Endothelial cell of umbilical vein (primary cell): ENCODE measurements at regions of chr1 and their contacts with region 1.

Region 1: GRCh38 chr1:156456622-156457465 is 43.7 kb downstream of the MEF2D start:
- DNase-seq: peak; percentile 95
- H3K4me3 ChIP-seq: peak overlapping the region; percentile 11 to 73 (median 31)
- H3K27ac ChIP-seq: peak overlapping the region; percentile 80
- H3K4me1 ChIP-seq: peaks cover 11% of the 10 kb centered on the region
- H3K27me3 ChIP-seq: peaks cover 6 to 10% of the 10 kb centered on the region in 2 experiments
- CTCF ChIP-seq: no peak
- POLR2A ChIP-seq: peak; percentile 80

Region 2: GRCh38 chr1:156489166-156489934 is 32.5 kb after region 1 on chr1:
- CTCF ChIA-PET with region 1: no interaction called
- POLR2A ChIA-PET with region 1: no interaction called
- dilution Hi-C with region 1: no loop called
- intact Hi-C with region 1: no loop called
- DNase-seq: no peak
- H3K4me3 ChIP-seq: no peak overlapping the region
- H3K27ac ChIP-seq: no peak overlapping the region
- H3K4me1 ChIP-seq: peaks cover 21% of the 10 kb centered on the region
- H3K27me3 ChIP-seq: no peaks in the 10 kb centered on the region
- CTCF ChIP-seq: no peak
- POLR2A ChIP-seq: no peak

Region 3: DNA sequence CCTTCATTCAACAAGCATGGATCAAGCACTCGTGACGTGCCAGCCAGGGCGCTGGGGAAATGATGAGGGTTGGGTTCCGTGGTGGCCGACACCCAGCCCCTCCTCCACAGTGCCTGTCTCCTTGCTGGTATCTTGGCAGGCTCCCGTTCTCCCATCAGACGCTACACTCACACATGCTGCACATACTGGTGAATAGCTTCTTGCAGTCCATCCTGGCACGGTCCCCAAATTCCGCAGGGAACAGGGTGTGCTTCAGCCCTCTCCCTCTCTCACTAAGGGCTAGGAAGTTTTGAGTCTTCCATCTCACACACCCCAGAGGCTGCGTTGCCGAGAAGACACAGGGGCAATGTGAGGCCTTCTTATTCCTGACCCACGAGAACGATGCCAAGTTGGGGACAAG is 53.9 kb after region 1 on chr1:
- CTCF ChIA-PET with region 1: no interaction called
- POLR2A ChIA-PET with region 1: no interaction called
- dilution Hi-C with region 1: no loop called
- intact Hi-C with region 1: no loop called
- DNase-seq: no peak
- H3K4me3 ChIP-seq: no peak overlapping the region
- H3K27ac ChIP-seq: no peak overlapping the region
- H3K4me1 ChIP-seq: peaks cover 2% of the 10 kb centered on the region
- H3K27me3 ChIP-seq: peaks cover 0 to 3% of the 10 kb centered on the region in 2 experiments
- CTCF ChIP-seq: no peak
- POLR2A ChIP-seq: no peak

Region 4: GRCh38 chr1:156571949-156572662 is 115.3 kb after region 1 on chr1 and contains the start of gene IQGAP3:
- CTCF ChIA-PET with region 1: no interaction called
- POLR2A ChIA-PET with region 1: no interaction called
- dilution Hi-C with region 1: no loop called
- intact Hi-C with region 1: loop called (anchors 1 kb)
- DNase-seq: peak; percentile 73
- H3K4me3 ChIP-seq: peak within 1 kb of the TSS; percentile 66 to 71 (median 68)
- H3K27ac ChIP-seq: peak within 1 kb of the TSS; percentile 61
- H3K4me1 ChIP-seq: peaks cover 13% of the 10 kb centered on the region
- H3K27me3 ChIP-seq: peaks cover 3 to 6% of the 10 kb centered on the region in 2 experiments
- CTCF ChIP-seq: no peak
- POLR2A ChIP-seq: no peak
- total RNA-seq, gene IQGAP3: 48.6 and 60.7 TPM in 2 replicates

Region 5: DNA sequence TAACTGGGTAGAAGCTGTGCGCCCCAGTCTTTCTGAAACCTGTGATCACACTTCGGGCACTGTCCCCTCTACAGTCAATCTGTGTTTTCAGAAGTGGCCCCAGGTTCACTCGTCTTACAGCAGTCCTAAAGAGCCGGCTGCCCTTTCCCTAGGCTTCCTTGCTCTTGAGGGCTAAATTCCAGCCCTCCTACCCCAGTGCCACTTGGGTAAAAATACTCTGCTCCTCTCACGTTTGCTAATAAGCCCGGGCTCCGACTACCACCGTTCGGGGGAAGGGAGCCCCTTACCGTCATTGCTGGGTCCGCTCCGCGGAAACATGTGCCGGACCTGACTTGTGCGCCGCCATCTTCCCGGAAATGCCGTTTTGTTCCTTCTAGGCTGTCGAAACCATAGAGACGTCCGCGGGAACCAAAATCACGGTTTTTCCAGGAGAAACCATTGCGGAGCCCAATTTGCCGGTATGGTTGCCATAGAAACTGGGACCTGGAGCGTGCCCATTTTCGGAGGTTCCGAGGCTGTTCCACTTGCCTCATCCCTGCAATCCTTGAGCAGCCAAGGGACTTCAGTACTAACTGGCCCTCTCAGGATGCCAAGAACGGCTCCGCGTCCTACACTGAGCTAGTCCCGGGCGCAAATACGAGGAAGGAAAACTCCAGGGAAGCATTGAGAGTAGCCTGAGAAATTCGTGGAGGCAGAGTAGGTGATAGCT is 144.4 kb after region 1 on chr1 and contains the start of gene GPATCH4:
- CTCF ChIA-PET with region 1: no interaction called
- POLR2A ChIA-PET with region 1: no interaction called
- dilution Hi-C with region 1: no loop called
- intact Hi-C with region 1: loop called (anchors 2 kb)
- DNase-seq: peak; percentile 90
- H3K4me3 ChIP-seq: peak within 1 kb of the TSS; percentile 50 to 87 (median 58)
- H3K27ac ChIP-seq: peak within 1 kb of the TSS; percentile 60
- H3K4me1 ChIP-seq: peaks cover 10% of the 10 kb centered on the region
- H3K27me3 ChIP-seq: no peaks in the 10 kb centered on the region
- CTCF ChIP-seq: no peak
- POLR2A ChIP-seq: peak; percentile 90
- total RNA-seq, gene GPATCH4: 29.2 and 32.0 TPM in 2 replicates